AG04450 (cell line): ENCODE measurements at regions of chr4 and their contacts with region 1.

Region 1: GRCh38 chr4:158172261-158173258 is at the start of gene GASK1B:
- DNase-seq: peak; percentile 26
- H3K4me3 ChIP-seq: peak within 1 kb of the TSS; percentile 53
- H3K27ac ChIP-seq: no peak within 1 kb of the TSS
- H3K27me3 ChIP-seq: no peaks in the 10 kb centered on the region
- CTCF ChIP-seq: peak; percentile 81
- polyA plus RNA-seq, gene GASK1B: 32.9 and 41.7 TPM in 2 replicates

Region 2: GRCh38 chr4:157988641-157989040 is 183.9 kb before region 1 on chr4:
- CTCF ChIA-PET with region 1: interaction called, 38 read pairs
- POLR2A ChIA-PET with region 1: no interaction called
- DNase-seq: no peak
- H3K4me3 ChIP-seq: no peak overlapping the region
- H3K27ac ChIP-seq: no peak overlapping the region
- H3K27me3 ChIP-seq: no peaks in the 10 kb centered on the region
- CTCF ChIP-seq: no peak

Region 3: GRCh38 chr4:158020176-158020575 is 152.4 kb before region 1 on chr4:
- CTCF ChIA-PET with region 1: interaction called, 12 read pairs
- POLR2A ChIA-PET with region 1: interaction called, 3 read pairs
- DNase-seq: peak; percentile 86
- H3K4me3 ChIP-seq: no peak overlapping the region
- H3K27ac ChIP-seq: peak overlapping the region; percentile 11
- H3K27me3 ChIP-seq: no peaks in the 10 kb centered on the region
- CTCF ChIP-seq: no peak

Region 4: DNA sequence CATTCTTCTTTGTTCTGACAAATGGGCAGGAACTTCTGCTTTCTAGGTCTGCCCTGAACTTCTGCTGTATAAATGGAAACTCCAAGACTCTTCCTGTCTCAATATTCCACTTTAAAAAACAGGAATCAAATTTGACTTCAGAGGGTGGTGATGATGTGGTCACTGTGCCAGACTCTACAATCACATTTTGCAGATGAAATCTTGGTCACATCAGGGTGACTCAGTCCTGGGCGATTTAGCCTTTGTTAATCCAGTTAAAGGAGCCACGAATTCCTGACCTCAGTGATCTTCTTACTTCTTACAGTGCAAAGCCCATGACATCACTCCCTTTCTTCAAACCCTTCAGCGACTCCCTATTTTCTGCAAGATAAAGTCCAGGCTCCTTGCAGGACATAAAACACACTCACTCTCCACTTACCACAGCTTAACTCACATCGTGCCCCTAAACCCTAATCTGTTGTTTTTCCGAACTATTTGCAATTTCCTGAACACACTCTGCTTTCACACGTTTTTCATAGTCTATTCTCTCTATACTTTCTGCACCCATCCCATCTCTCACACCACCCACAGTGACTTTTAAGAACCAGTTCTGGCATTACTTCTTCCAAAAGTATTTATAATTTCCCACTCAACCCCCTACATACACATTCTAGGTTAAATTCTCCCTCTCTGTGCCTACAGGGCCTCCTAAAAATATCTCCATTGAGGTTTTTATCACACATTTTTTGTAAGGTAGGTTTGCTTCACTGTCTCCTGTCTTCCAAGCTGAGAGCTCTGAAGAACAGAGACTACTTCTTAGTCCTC is 10.8 kb before region 1 on chr4:
- CTCF ChIA-PET with region 1: interaction called, 18 read pairs
- POLR2A ChIA-PET with region 1: no interaction called
- DNase-seq: no peak
- H3K4me3 ChIP-seq: no peak overlapping the region
- H3K27ac ChIP-seq: peak overlapping the region; percentile 34
- H3K27me3 ChIP-seq: no peaks in the 10 kb centered on the region
- CTCF ChIP-seq: no peak